Astrocyte of the cerebellum (primary cell): ENCODE measurements at regions of chr4 and their contacts with region 1.

Region 1: GRCh38 chr4:47713128-47713834 is 124.6 kb downstream of the CORIN start:
- DNase-seq: no peak
- H3K4me3 ChIP-seq: no peak overlapping the region
- CTCF ChIP-seq: no peak

Region 2: DNA sequence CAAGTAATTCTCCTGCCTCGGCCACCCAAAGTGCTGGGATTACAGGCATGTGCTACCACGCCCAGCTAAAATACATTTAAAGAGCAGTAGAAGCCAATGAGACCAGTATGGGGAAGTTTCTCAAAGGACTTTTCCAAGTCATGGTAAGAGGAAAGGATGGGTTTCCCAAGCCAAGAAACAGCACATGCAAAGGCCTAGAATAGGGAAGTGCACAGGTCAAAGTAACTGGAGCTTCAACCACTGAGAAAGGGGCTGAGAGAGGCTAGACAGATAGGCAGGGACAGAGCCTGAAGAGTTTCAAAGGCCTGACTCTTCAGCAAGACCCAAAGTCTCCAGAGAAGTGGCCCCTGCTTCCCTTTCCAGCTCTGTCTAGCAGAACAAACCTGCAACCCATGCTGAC is 37.5 kb before region 1 on chr4:
- in situ Hi-C with region 1: loop called (anchors 5 kb)
- DNase-seq: no peak
- H3K4me3 ChIP-seq: no peak overlapping the region
- CTCF ChIP-seq: no peak

Region 3: DNA sequence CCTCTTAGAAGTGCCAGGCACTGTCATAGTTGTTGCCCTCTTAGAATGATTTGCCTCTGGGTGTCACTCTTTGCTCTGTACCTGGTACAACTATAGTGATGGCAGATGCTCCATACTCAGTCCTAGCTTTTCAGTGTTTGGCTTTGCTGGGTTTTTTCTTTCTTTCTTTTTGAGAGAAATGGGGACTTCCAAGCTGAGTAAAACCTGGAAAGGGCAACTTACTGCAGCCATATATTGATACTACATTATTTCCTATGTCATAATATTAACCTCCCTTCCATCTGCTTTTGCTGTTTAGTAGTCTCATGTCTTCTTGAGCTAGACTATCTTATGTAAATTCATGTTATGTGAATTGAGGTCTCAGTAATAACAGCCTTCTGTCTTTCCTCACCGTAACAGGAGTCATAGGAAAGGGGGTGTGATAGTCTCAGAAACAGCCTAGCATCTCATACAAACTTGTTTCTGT is 352.3 kb after region 1 on chr4:
- in situ Hi-C with region 1: no loop called
- DNase-seq: no peak
- H3K4me3 ChIP-seq: no peak overlapping the region
- CTCF ChIP-seq: no peak